AG04450 (cell line): ENCODE measurements at regions of chr2 and their contacts with region 1.

Region 1: GRCh38 chr2:75555701-75556100 is 5.0 kb downstream of the EVA1A start:
- DNase-seq: no peak
- H3K4me3 ChIP-seq: no peak overlapping the region
- H3K27ac ChIP-seq: no peak overlapping the region
- H3K27me3 ChIP-seq: no peaks in the 10 kb centered on the region
- CTCF ChIP-seq: no peak

Region 2: DNA sequence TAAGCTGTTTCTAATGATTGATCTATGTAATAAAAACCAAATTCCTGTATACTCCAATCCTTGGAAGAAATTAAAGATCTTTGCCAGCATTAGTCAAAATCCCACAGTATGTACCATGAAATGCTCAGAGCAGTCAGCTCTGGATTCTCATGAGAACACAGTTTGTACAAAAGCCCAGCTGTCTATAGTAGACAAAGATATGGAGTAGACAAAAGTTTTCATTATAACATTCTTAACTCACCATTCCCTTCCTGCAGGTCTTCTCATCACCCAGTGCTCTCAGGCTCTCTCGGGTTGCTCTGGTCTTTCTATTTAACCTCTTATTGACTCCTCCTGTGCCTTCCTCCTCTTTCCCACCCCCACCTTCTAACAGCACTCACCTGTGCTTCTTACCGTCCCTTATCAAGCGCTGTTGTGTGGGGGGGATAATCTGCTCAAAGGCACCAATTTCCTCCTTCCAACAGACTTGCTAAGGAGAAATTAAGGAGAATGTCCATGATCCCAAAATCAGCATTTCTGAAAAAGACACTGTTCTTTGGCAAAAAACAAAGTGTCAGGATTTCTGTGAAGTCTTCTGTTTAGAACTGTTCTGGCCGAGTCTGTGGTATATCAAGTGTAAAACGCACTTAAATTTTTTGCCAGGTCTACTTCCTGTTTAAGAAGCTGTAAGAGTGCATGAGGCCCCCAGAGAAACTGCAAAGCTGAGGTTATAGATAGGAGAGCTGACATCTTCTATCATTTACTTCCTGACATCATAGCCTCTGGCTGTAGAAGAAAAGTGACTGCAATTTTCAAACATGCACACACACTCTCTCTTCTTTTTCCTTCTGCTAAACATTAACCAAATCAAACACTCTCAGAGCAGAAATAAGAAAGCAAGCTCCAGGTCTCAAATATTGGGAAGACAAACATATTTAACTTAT is 139.0 kb before region 1 on chr2:
- CTCF ChIA-PET with region 1: no interaction called
- POLR2A ChIA-PET with region 1: no interaction called
- DNase-seq: no peak
- H3K4me3 ChIP-seq: no peak overlapping the region
- H3K27ac ChIP-seq: no peak overlapping the region
- H3K27me3 ChIP-seq: peaks cover 6% of the 10 kb centered on the region
- CTCF ChIP-seq: no peak

Region 3: GRCh38 chr2:75538521-75539490 is 16.9 kb before region 1 on chr2:
- CTCF ChIA-PET with region 1: no interaction called
- POLR2A ChIA-PET with region 1: no interaction called
- DNase-seq: no peak
- H3K4me3 ChIP-seq: no peak overlapping the region
- H3K27ac ChIP-seq: no peak overlapping the region
- H3K27me3 ChIP-seq: no peaks in the 10 kb centered on the region
- CTCF ChIP-seq: no peak

Region 4: DNA sequence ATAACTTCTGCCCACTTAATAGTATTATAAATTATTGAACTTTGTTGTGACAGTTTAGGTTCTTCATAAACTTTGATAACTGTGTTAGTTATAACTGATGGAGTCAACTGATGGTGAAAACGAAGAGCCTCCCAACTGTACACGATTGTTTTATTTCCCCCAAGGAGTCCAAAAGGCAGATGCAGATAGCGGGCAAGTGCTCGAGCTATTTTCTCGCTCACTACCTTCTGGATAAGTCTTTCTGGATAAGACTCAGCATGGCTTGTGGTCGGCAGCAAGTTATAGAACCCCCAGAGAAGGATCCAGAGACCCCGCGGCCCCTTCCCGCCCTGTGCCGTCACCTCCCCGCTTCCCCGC is 154.5 kb after region 1 on chr2:
- CTCF ChIA-PET with region 1: no interaction called
- POLR2A ChIA-PET with region 1: interaction called, 10 read pairs
- DNase-seq: no peak
- H3K4me3 ChIP-seq: peak overlapping the region; percentile 72
- H3K27ac ChIP-seq: peak overlapping the region; percentile 84
- H3K27me3 ChIP-seq: no peaks in the 10 kb centered on the region
- CTCF ChIP-seq: no peak